Endothelial cell of umbilical vein (primary cell): ENCODE measurements at regions of chr2 and their contacts with region 1.

Region 1: DNA sequence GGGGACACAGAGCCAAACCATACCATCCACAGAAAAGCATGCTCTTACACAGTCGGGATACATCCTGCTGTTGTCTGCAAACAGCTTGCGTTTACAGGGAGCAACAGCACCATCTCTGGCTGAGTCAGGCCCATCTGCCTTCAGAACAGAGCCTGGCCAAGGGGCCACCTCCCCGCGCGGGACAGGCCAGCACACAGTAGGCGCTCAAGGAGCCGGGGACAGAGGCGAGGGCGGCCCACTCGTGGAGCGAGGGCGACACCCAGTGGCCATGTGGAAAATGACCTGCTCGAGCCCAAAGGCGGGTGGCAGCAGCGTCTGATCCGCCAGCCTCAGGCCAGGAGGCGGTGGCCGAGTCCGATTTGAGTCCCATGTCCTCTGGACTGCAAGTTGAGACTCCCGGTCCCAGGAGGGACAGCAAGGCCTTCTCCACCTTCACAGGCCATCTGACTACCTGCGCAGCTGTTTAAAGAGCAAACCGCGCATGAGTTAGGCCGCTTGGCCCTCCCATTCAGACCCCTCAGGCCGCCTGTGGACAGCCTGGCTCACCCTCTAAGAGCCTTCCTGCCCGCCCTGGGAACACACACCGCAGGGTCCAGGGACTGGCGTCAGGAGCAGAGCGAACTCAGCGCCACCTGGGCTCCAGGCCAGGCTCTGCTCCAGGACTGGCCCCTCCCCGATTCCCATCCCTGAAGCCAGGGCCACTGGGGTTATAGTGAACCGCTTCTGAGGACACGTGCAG is 38.3 kb downstream of the TTC32 start:
- DNase-seq: peak; percentile 55
- H3K4me3 ChIP-seq: no peak overlapping the region
- H3K27ac ChIP-seq: no peak overlapping the region
- H3K4me1 ChIP-seq: peaks cover under 1% of the 10 kb centered on the region
- H3K27me3 ChIP-seq: no peaks in the 10 kb centered on the region
- CTCF ChIP-seq: peak; percentile 88 to 94
- POLR2A ChIP-seq: no peak

Region 2: GRCh38 chr2:18520451-18521425 is 1342.7 kb before region 1 on chr2:
- CTCF ChIA-PET with region 1: interaction called, 19 read pairs
- POLR2A ChIA-PET with region 1: no interaction called
- dilution Hi-C with region 1: no loop called
- intact Hi-C with region 1: loop called (anchors 1 kb)
- DNase-seq: peak; percentile 78
- H3K4me3 ChIP-seq: no peak overlapping the region
- H3K27ac ChIP-seq: no peak overlapping the region
- H3K4me1 ChIP-seq: no peaks in the 10 kb centered on the region
- H3K27me3 ChIP-seq: no peaks in the 10 kb centered on the region
- CTCF ChIP-seq: peak; percentile 84 to 89
- POLR2A ChIP-seq: no peak

Region 3: GRCh38 chr2:18883616-18884456 is 979.6 kb before region 1 on chr2:
- CTCF ChIA-PET with region 1: no interaction called
- POLR2A ChIA-PET with region 1: no interaction called
- dilution Hi-C with region 1: no loop called
- intact Hi-C with region 1: loop called (anchors 1 kb)
- DNase-seq: no peak
- H3K4me3 ChIP-seq: no peak overlapping the region
- H3K27ac ChIP-seq: no peak overlapping the region
- H3K4me1 ChIP-seq: no peaks in the 10 kb centered on the region
- H3K27me3 ChIP-seq: no peaks in the 10 kb centered on the region
- CTCF ChIP-seq: peak in 1 of 2 donors; percentile 11
- POLR2A ChIP-seq: no peak

Region 4: GRCh38 chr2:19369341-19369955 is 494.0 kb before region 1 on chr2:
- CTCF ChIA-PET with region 1: interaction called, 21 read pairs
- POLR2A ChIA-PET with region 1: no interaction called
- dilution Hi-C with region 1: no loop called
- intact Hi-C with region 1: loop called (anchors 1 kb)
- DNase-seq: no peak
- H3K4me3 ChIP-seq: no peak overlapping the region
- H3K27ac ChIP-seq: no peak overlapping the region
- H3K4me1 ChIP-seq: no peaks in the 10 kb centered on the region
- H3K27me3 ChIP-seq: peaks cover 25 to 32% of the 10 kb centered on the region in 2 experiments
- CTCF ChIP-seq: no peak
- POLR2A ChIP-seq: no peak

Region 5: DNA sequence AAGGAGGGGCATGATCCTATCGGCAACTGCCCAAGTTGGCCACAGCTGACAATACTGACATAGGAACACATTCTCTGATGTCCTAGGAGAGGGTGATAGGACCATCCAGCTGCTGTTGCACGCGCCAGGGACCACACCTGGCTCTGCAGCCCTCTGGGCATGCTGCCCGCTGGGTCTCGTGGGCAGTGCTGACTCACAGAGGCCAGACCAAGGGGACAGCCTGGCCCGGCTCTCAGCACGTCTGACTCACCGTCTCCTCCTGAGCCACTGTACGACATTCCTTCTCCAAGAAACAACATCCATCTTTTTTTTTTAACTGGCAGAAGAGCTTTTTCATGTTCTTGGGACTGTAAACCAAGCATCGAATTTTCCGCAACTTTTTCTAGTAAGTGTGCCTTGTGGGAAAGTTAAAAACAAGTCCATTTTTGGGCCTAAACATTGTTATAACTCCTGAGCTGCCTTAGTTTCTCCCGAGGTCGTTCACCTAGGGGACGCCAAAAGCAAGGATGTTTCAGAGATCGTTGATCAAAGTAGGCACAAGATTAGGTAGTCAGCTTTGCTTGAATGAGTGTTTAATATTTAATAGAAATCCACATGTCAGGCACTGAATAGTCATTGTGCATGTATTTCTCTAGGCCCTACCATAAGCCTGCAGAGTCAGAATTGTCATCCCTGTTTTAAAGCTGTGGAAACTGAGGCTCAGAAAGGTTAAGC is 61.9 kb before region 1 on chr2:
- CTCF ChIA-PET with region 1: interaction called, 11 read pairs
- POLR2A ChIA-PET with region 1: no interaction called
- dilution Hi-C with region 1: no loop called
- intact Hi-C with region 1: loop called (anchors 1 kb)
- DNase-seq: peak; percentile 97
- H3K4me3 ChIP-seq: no peak overlapping the region
- H3K27ac ChIP-seq: peak overlapping the region; percentile 47
- H3K4me1 ChIP-seq: peaks cover 13% of the 10 kb centered on the region
- H3K27me3 ChIP-seq: peaks cover 0 to 2% of the 10 kb centered on the region in 2 experiments
- CTCF ChIP-seq: no peak
- POLR2A ChIP-seq: no peak